PC-9 (cell line): ENCODE measurements at regions of chr7 and their contacts with region 1.

Region 1: GRCh38 chr7:136009488-136010079 is 32.4 kb upstream of the MTPN start:
- DNase-seq: peak in 1 of 2 experiments; percentile 55
- H3K4me3 ChIP-seq: no peak overlapping the region
- H3K27ac ChIP-seq: no peak overlapping the region
- H3K4me1 ChIP-seq: no peaks in the 10 kb centered on the region
- H3K27me3 ChIP-seq: no peaks in the 10 kb centered on the region
- CTCF ChIP-seq: peak; percentile 95

Region 2: GRCh38 chr7:135620980-135621850 is 388.4 kb before region 1 on chr7:
- CTCF ChIA-PET with region 1: no interaction called
- POLR2A ChIA-PET with region 1: no interaction called
- intact Hi-C with region 1: loop called (anchors 1 kb)
- DNase-seq: peak; percentile 26 to 75
- H3K4me3 ChIP-seq: no peak overlapping the region
- H3K27ac ChIP-seq: no peak overlapping the region
- H3K4me1 ChIP-seq: no peaks in the 10 kb centered on the region
- H3K27me3 ChIP-seq: no peaks in the 10 kb centered on the region
- CTCF ChIP-seq: peak; percentile 94